ENCODE measurements at regions of chr16 and their contacts with region 1.

Region 1: DNA sequence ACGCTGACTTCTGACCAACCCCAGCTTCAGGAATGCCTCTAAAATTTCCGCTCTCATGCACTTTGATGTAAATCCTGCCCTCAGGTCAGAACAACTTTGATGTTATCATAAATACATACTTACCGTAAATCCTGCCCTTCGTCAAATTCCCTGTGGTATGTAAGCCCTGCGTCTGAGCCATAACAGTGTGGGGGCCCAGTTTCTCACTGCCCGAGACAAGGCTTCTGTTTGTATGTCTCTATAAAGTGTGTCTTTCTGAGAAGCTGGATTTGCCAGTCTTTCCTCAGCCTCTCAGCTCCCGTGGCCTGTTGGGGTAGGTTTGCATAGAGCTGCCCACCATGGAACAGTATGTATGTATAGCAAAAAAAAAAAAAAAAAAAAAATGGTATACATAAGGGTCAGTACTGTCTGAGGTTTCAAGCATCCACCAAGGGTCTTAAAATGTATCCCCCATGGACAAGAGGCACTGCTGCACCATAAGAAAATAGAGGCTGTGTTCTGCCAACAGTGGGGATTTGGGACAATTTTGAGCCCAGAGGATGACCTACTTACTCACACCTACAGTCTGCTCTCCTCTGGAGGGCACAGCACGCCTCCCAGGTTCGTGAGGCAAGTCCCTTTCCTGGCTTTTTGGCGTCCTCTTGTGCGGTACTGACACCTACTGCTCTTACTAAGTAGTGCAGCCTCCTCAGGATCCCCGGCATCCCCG is 17.5 kb downstream of the PRMT7 start:
- DNase-seq: peak; percentile 94
- H3K4me3 Mint-ChIP-seq: no peak overlapping the region
- H3K27ac Mint-ChIP-seq: no peak overlapping the region
- H3K4me1 Mint-ChIP-seq: peaks cover 30% of the 10 kb centered on the region
- H3K27me3 Mint-ChIP-seq: no peaks in the 10 kb centered on the region

Region 2: GRCh38 chr16:68244903-68245853 is 83.1 kb before region 1 on chr16 and contains the start of gene PLA2G15:
- intact Hi-C with region 1: loop called (anchors 1 kb)
- DNase-seq: peak; percentile 98
- H3K4me3 Mint-ChIP-seq: peak within 1 kb of the TSS; percentile 100
- H3K27ac Mint-ChIP-seq: peak within 1 kb of the TSS; percentile 85
- H3K4me1 Mint-ChIP-seq: peaks cover 23% of the 10 kb centered on the region
- H3K27me3 Mint-ChIP-seq: peaks cover 2% of the 10 kb centered on the region
- total RNA-seq, gene PLA2G15: 7.2 and 8.4 TPM in 2 replicates

Region 3: DNA sequence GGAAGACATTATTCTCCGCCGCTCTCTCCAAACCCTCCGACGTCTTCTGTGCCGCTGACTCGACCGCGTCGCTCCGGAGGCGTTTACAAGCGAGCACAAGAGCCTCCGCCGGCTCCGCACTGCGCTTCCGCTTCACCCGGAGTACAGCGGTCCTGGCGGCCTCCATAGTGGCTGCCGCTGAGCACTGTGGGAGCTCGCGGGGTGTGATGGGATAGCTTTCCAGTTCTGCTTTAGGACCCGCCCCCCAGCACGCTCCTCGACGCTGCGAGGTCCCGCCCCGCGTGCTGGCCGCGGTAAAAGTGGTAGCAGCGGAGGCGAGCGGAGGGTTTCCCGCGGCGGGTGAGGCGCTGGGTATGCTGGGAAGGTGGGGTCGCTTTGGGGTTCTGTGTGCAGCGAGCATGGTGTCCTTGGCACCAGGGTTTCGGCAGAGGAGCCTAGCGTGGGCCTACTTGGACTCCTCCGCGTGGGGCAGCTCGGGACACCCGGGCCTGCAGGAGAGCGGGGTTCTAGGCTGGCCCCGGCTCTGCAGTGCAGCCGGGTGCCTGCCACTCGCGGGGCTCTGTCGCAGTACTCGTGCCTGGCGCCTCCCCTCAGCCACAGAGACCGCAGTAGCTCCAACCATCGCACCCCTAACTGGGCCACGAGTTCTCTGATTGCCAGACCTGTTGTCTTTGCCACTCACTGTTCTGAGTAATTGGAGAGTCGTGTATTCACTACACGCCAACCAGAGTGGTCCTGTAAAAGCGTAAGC is 17.4 kb before region 1 on chr16 and contains the starts of genes PRMT7 and SLC7A6OS:
- intact Hi-C with region 1: loop called (anchors 1 kb)
- DNase-seq: peak; percentile 98
- H3K4me3 Mint-ChIP-seq: peak within 1 kb of the TSS; percentile 89
- H3K27ac Mint-ChIP-seq: peak within 1 kb of the TSS; percentile 86
- H3K4me1 Mint-ChIP-seq: peaks cover 37% of the 10 kb centered on the region
- H3K27me3 Mint-ChIP-seq: no peaks in the 10 kb centered on the region
- total RNA-seq, gene PRMT7: 69.7 and 72.2 TPM in 2 replicates
- total RNA-seq, gene SLC7A6OS: 22.3 and 27.1 TPM in 2 replicates

Region 4: GRCh38 chr16:68910051-68910450 is 581.7 kb after region 1 on chr16:
- intact Hi-C with region 1: loop called (anchors 10 kb)
- DNase-seq: no peak
- H3K4me3 Mint-ChIP-seq: no peak overlapping the region
- H3K27ac Mint-ChIP-seq: no peak overlapping the region
- H3K4me1 Mint-ChIP-seq: no peaks in the 10 kb centered on the region
- H3K27me3 Mint-ChIP-seq: no peaks in the 10 kb centered on the region

Measured in activated CD4-positive, alpha-beta T cell treated with anti-CD3 and anti-CD28 coated beads, Interleukin-2, amount 10 ng/mL, durations not matched to agents 24 days and 14 days (primary cell).